Dorsolateral prefrontal cortex (tissue), 120 donors: ENCODE measurements at regions of chr11 and their contacts with region 1.

Region 1: DNA sequence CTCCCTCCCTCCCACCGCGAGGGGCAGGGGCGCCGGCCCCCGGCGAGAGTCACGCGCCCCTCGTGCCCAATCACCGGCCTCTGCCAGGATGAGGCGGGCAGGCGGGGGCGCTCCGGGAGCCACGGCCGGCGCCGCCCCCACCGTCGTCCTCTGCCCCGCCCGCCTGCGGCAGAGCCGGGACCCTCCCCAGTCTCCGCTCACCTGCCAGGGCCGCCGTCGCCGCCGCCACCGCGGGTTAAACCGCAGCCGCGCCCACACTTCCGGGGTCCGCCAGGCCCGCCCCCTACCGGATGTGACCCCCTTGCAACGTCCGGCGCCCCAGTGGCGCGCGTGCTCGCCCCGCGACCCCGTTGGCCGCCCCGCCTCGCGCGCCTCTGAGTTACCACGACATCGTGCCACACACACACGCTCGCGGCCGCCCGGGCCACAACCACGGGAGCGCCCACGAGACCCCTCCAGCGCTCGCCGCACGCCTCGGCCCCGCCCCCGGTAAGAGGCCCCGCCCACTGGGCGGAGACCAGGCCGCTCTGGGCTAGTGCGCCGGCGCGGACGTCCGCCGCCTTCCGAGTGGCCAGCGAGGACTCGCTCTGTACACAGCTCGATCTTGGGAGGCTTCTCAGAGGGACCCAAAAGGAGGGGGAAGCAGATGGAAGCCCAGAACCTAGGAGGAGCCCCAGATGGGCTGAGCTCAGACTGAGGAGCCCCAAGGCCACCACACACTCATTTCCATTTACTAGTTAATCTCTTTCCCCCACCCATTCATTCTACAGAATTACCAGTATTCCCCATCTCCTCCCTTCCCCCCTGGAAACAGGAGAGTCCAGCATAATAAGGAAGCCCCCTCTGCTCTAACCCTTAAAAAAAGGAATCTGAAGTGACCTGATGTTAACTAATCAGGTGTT is at the start of gene VPS37C:
- DNase-seq: peak; percentile 80 to 95 (median 88)
- H3K4me3 ChIP-seq: peak within 1 kb of the TSS; percentile 63 to 98 (median 83)
- H3K27ac ChIP-seq: peak within 1 kb of the TSS; percentile 74 to 99 (median 96)
- H3K27me3 ChIP-seq: no peaks in the 10 kb centered on the region
- CTCF ChIP-seq: peak in 50 of 56 donors; percentile 12 to 71 (median 47)
- total RNA-seq, gene VPS37C: 15.7 to 30.0 (median 20.6) TPM

Region 2: DNA sequence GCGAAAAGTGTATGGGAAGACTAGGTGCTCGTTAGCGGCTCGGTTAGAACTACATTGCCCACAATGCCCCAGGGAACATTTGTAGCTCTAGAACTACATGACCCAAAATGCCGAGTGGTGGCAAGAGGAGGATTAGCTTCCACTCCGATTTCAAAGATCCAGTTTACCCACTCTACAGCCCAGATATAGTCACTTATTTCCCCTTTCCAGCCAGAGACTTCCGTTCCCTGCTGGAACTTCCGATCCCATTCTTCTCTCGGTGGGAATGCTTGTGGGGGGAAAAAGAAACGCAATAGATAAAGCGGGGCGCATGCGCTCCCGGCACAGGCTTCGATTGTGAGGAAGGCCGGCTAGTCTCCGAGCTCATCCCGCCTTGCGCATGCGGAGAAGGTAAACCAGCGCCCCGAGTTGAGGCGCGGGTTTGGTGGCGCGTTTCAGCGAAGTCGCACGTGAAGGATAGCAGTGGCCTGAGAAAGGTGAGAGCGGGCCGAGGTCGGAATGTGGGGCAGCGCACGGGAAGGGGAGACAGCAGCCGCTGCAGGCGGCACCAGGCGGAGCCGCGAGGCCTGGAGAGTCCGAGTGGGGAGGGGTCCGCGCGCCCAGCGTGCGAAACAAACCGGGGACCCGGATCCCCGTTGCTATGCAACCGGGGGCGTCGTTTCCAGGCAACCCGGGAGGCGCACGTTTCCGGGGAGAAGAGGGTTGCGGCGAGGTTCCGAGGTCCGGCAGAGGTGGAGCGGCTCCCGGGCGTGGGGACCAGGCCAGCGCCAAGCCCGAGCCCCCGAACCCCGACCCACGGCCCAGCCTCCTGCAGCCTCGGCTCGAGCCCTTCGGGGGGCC is 247.4 kb before region 1 on chr11 and contains the start of gene TMEM109:
- intact Hi-C with region 1: loop called in 1 of 2 experiments (anchors 5 kb)
- DNase-seq: peak; percentile 85 to 91 (median 90)
- H3K4me3 ChIP-seq: peak within 1 kb of the TSS; percentile 57 to 100 (median 92)
- H3K27ac ChIP-seq: peak within 1 kb of the TSS; percentile 80 to 100 (median 98)
- H3K27me3 ChIP-seq: no peaks in the 10 kb centered on the region
- CTCF ChIP-seq: peak in 34 of 56 donors; percentile 10 to 56 (median 24)
- total RNA-seq, gene TMEM109: 30.8 to 53.0 (median 40.0) TPM

Region 3: DNA sequence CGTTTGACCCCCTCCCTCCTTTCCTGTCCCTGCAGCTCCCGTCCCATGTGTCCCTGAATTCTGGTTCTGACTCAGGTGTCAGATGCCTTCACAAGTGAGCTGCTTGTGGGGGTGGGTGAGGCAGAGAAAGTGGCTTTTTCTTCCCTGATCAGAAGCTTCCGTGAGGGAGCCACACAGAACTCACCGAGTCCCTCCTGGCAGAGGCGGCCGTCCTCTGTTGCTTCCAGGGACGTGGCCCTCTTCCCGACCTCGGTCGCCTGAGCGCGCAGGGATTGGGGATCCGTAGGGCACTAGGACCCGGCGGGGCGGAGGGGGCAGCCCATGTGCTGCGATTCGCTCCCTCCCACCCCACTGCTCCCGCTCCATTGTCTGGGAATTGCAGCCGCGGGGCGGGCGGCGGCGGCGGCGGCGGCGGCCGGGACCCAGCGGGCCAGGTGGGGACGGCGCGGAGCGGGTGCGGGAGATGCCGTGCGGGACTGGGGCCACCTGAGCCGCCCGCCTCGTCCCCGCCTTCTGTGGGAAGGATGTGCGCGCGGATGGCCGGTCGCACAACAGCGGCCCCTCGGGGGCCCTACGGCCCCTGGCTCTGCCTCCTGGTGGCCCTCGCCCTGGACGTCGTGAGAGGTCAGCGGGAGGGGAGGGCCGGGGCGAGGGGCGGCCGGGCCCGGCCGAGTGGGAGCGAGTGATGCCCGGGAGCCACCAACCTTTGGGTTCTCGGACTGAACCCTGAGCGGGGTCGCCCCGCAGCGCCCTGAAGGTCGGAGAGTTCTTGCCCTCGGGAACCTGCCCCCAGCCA is 237.1 kb before region 1 on chr11 and contains the start of gene TMEM132A:
- intact Hi-C with region 1: loop called in 1 of 2 experiments (anchors 5 kb)
- DNase-seq: peak; percentile 77 to 93 (median 89)
- H3K4me3 ChIP-seq: peak within 1 kb of the TSS; percentile 44 to 93 (median 81)
- H3K27ac ChIP-seq: peak within 1 kb of the TSS in 55 of 59 donors; percentile 7 to 94 (median 76)
- H3K27me3 ChIP-seq: no peaks in the 10 kb centered on the region
- CTCF ChIP-seq: peak in 8 of 56 donors; percentile 10 to 24 (median 14)
- total RNA-seq, gene TMEM132A: 98.1 to 297 (median 159) TPM

Region 4: GRCh38 chr11:61361686-61362541 is 200.5 kb after region 1 on chr11 and contains the starts of genes CYB561A3 and TMEM138:
- intact Hi-C with region 1: loop called in 1 of 2 experiments (anchors 10 kb)
- DNase-seq: peak; percentile 87 to 96 (median 94)
- H3K4me3 ChIP-seq: peak within 1 kb of the TSS; percentile 52 to 98 (median 83)
- H3K27ac ChIP-seq: peak within 1 kb of the TSS; percentile 95 to 100 (median 100)
- H3K27me3 ChIP-seq: no peaks in the 10 kb centered on the region
- CTCF ChIP-seq: peak in 22 of 56 donors; percentile 7 to 54 (median 20)
- total RNA-seq, gene CYB561A3: 7.2 to 29.3 (median 19.0) TPM
- total RNA-seq, gene TMEM138: 18.4 to 51.8 (median 31.7) TPM

Region 5: DNA sequence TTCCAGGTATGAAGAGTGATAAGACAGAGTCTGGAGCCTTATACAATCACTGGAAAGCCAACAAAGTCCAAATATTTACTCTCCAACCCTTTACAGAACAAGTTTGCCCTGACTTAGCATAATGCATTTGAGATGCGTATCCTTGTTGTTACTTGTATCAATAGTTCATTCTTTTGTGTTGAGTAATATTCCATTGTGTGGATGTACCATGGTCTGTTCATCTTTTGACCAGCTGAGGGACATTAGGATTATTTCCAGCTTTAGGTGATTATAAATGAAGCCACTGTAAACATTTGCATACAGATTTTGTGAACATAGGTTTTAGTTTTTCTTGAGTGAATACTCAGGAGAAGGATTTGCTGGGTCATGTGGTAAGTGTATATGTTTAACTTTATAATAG is 278.2 kb after region 1 on chr11:
- intact Hi-C with region 1: no loop called
- DNase-seq: no peak
- H3K4me3 ChIP-seq: no peak overlapping the region
- H3K27ac ChIP-seq: no peak overlapping the region
- H3K27me3 ChIP-seq: no peaks in the 10 kb centered on the region
- CTCF ChIP-seq: no peak